BJ (cell line): ENCODE measurements at regions of chr1 and their contacts with region 1.

Region 1: GRCh38 chr1:97379387-97380075 is 541.3 kb downstream of the DPYD start:
- DNase-seq: peak; percentile 41
- H3K4me3 ChIP-seq: no peak overlapping the region
- H3K27me3 ChIP-seq: no peaks in the 10 kb centered on the region
- CTCF ChIP-seq: no peak

Region 2: DNA sequence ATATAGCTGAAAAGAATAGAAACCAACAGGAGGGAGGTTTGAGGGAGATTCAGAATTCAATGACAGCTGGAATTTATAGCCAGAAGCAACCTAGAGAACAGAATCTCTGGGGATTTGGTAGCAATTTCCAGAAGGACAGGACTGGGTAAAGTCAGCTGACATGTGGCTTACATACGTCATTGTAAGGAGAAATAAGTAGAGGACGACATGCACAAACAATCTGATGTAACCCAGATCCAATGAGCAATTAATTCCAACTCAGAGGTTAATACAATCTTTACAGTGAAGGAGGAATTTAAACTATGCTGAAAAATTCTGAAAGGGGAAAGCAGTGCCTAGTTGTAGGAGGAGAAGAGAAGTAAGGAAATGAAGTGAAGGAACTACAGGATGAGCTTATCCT is 274.0 kb before region 1 on chr1:
- CTCF ChIA-PET with region 1: no interaction called
- POLR2A ChIA-PET with region 1: interaction called, 10 read pairs
- DNase-seq: no peak
- H3K4me3 ChIP-seq: no peak overlapping the region
- H3K27me3 ChIP-seq: no peaks in the 10 kb centered on the region
- CTCF ChIP-seq: no peak

Region 3: GRCh38 chr1:97332716-97333115 is 46.8 kb before region 1 on chr1:
- CTCF ChIA-PET with region 1: no interaction called
- POLR2A ChIA-PET with region 1: no interaction called
- DNase-seq: no peak
- H3K4me3 ChIP-seq: no peak overlapping the region
- H3K27me3 ChIP-seq: no peaks in the 10 kb centered on the region
- CTCF ChIP-seq: no peak